ENCODE measurements at regions of chr3 and their contacts with region 1.

Region 1: DNA sequence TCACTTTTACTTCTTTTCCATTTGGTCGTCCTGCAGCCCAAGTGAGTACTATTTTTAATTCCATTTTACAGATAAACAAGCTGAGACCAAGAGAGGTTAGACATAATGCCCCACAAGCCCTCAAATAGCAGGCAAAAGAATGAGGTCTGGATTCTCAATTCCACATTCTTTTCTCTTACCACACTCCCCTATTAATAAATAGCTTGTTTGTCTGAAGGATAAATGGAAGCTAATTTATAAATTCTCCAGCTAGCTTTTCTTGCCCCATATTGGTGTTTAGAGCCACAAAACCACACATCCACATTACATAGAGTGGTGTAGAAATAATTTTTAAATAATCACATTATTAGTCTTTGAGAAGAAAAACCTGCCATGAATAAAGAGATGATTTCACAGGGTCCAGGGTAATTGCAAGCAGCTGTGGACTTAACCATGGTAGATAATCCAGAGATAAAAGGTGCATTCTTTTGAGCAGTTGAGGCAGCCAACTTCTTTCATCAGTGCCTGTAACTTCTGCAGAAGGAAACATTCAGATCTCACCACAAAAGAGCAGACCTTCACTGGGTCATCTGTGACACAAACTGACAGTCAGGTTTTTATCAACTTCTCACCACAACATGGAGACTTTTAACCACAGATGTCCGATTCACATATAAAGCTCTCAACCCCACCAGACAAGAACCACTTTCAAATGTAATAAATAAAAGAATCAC is 313.4 kb upstream of the STT3B start:
- DNase-seq: no peak
- H3K4me3 Mint-ChIP-seq: no peak overlapping the region
- H3K27ac Mint-ChIP-seq: peak overlapping the region; percentile 35
- H3K4me1 Mint-ChIP-seq: peaks cover 80% of the 10 kb centered on the region
- H3K27me3 Mint-ChIP-seq: no peaks in the 10 kb centered on the region

Region 2: GRCh38 chr3:31247850-31248562 is 28.7 kb after region 1 on chr3:
- intact Hi-C with region 1: loop called (anchors 1 kb)
- DNase-seq: no peak
- H3K4me3 Mint-ChIP-seq: no peak overlapping the region
- H3K27ac Mint-ChIP-seq: peak overlapping the region; percentile 75
- H3K4me1 Mint-ChIP-seq: peaks cover 51% of the 10 kb centered on the region
- H3K27me3 Mint-ChIP-seq: no peaks in the 10 kb centered on the region

Region 3: DNA sequence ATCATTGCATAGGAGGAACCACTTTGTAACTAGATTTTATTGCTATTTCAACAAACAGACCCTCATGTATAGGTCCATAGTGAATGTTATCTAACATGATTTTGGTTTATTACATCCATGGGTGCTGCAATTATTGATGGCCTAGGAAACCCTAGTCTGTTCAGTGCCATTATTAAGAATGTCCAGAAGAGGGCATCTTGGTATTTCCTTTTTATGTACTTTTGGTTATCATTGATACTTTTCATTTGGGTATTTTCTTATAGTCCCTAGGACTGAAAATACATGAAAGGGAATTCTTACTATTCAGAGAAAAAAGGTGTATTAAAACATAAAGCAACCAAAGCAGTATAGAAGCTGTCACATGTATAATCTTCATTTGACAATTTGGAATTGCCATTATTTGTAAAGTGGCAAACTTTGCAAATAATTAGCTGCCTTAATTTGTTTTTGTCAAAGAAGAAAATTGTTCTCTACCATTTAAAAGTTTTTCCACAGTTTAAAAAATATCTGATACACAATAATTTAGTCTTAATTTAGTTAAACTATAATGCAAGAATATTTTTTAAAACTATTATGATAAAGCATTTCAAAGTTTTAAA is 1514.4 kb after region 1 on chr3:
- intact Hi-C with region 1: no loop called
- DNase-seq: no peak
- H3K4me3 Mint-ChIP-seq: no peak overlapping the region
- H3K27ac Mint-ChIP-seq: no peak overlapping the region
- H3K4me1 Mint-ChIP-seq: no peaks in the 10 kb centered on the region
- H3K27me3 Mint-ChIP-seq: no peaks in the 10 kb centered on the region

Measured in activated T-helper 1 cell treated with anti-CD3 and anti-CD28 coated beads, Interleukin-12 subunit alpha, Interleukin-12 subunit beta, Interleukin-2, Interleukin-4 antibody, amounts not matched to agents 30 ng/mL and 10 ng/mL and 1 ng/mL, durations not matched to agents 14 hours and 24 hours and 36 hours (primary cell).